ENCODE measurements at regions of chr22 and their contacts with region 1.

Region 1: DNA sequence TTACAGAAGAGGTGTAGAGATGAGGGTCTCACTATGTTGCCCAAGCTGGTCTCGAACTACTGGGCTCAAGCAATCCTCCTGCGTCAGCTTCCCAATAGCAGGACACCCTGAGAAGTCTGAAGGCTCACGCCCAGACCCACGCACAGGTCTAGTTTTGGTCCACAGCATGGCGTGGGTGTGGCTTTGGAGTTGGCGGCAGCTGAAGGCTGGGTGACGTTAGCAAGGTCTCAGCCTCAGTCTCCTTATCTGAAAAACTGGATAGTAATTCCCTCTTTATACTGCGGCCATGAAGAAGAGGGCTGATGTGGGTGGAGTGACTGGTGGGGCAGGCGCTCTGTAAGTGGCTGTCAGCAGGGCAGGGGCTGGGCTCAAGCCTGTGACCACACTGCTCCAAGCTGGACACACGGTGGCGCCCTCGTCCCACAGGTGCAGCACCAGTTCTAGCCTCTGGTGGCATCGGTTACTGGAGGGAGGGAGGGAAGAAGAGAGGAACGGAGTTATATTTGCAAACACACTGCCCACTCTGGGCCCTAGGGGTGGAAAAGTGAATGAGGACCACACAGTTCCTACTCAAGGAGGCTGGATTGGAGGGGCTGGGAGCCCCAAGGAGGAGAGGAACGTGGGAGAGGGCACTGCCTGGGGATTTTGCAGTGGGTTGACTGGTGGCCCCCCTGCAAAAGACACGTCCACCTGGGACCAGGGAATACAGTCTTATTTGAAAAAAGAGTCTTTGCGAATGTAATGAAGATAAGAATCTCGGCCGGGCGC is 19.6 kb upstream of the CARD10 start:
- DNase-seq: peak; percentile 93
- H3K4me3 Mint-ChIP-seq: no peak overlapping the region
- H3K27ac Mint-ChIP-seq: peak overlapping the region; percentile 64
- H3K4me1 Mint-ChIP-seq: peaks cover 45% of the 10 kb centered on the region
- H3K27me3 Mint-ChIP-seq: peaks cover 17% of the 10 kb centered on the region

Region 2: DNA sequence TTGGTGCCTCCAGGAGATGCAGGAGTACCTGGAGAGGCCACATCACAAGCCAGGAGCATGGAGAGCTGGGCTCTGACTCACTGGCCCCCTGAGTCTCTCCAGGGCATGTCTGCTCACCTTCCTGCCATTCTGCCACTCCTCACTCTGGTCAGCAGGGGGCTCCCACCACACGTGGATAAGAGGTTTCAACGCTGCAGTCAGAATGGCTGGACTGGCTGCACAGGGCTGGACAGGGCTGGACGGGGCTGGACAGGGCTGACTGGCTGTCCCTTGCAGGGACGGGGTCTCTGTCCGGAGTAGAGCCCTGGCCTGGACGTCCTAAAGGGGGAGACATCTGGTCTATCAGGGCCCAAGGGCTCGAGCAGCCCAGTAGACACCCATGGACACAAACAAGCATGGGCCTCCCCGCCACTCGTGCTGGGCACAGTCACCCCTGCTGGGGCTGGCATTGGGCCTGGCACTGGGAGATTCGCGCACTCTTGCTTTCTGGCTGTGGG is 221.9 kb before region 1 on chr22:
- CTCF ChIA-PET with region 1: no interaction called
- POLR2A ChIA-PET with region 1: no interaction called
- DNase-seq: peak; percentile 81
- H3K4me3 Mint-ChIP-seq: no peak overlapping the region
- H3K27ac Mint-ChIP-seq: no peak overlapping the region
- H3K4me1 Mint-ChIP-seq: peaks cover 40% of the 10 kb centered on the region
- H3K27me3 Mint-ChIP-seq: peaks cover 5% of the 10 kb centered on the region

Region 3: GRCh38 chr22:37551981-37552380 is 13.2 kb after region 1 on chr22:
- CTCF ChIA-PET with region 1: interaction called, 397 read pairs
- POLR2A ChIA-PET with region 1: no interaction called
- DNase-seq: no peak
- H3K4me3 Mint-ChIP-seq: no peak overlapping the region
- H3K27ac Mint-ChIP-seq: no peak overlapping the region
- H3K4me1 Mint-ChIP-seq: no peaks in the 10 kb centered on the region
- H3K27me3 Mint-ChIP-seq: peaks cover 32% of the 10 kb centered on the region

Region 4: GRCh38 chr22:37588546-37589215 is 49.9 kb after region 1 on chr22:
- CTCF ChIA-PET with region 1: interaction called, 29 read pairs
- POLR2A ChIA-PET with region 1: no interaction called
- DNase-seq: no peak
- H3K4me3 Mint-ChIP-seq: no peak overlapping the region
- H3K27ac Mint-ChIP-seq: no peak overlapping the region
- H3K4me1 Mint-ChIP-seq: peaks cover 12% of the 10 kb centered on the region
- H3K27me3 Mint-ChIP-seq: peaks cover 2% of the 10 kb centered on the region

Measured in activated CD4-positive, alpha-beta T cell treated with anti-CD3 and anti-CD28 coated beads, Interleukin-2, amount 10 ng/mL, durations not matched to agents 7 days and 5 days (primary cell).